SK-N-SH (cell line): ENCODE measurements at regions of chr20 and their contacts with region 1.

Region 1: GRCh38 chr20:46562373-46563169 is 12.1 kb upstream of the OCSTAMP start:
- DNase-seq: peak; percentile 80
- H3K4me3 ChIP-seq: peak overlapping the region; percentile 15 to 37; a peak in 3 of 4 replicates
- H3K27ac ChIP-seq: no peak overlapping the region; a peak in 1 of 4 replicates
- H3K4me1 ChIP-seq: peaks cover 0 to 12% of the 10 kb centered on the region in 2 experiments; a peak in 1 of 4 replicates
- H3K27me3 ChIP-seq: no peaks in the 10 kb centered on the region
- CTCF ChIP-seq: peak; percentile 92
- EP300 ChIP-seq: no peak
- RAD21 ChIP-seq: peak; percentile 59

Region 2: GRCh38 chr20:46430921-46431712 is 131.5 kb before region 1 on chr20:
- CTCF ChIA-PET with region 1: no interaction called
- POLR2A ChIA-PET with region 1: no interaction called
- DNase-seq: no peak
- H3K4me3 ChIP-seq: no peak overlapping the region
- H3K27ac ChIP-seq: no peak overlapping the region
- H3K4me1 ChIP-seq: peaks cover 0 to 8% of the 10 kb centered on the region in 2 experiments; a peak in 1 of 4 replicates
- H3K27me3 ChIP-seq: peaks cover 10% of the 10 kb centered on the region; the same call in 1 of the 2 replicates
- CTCF ChIP-seq: no peak
- EP300 ChIP-seq: no peak
- RAD21 ChIP-seq: no peak

Region 3: DNA sequence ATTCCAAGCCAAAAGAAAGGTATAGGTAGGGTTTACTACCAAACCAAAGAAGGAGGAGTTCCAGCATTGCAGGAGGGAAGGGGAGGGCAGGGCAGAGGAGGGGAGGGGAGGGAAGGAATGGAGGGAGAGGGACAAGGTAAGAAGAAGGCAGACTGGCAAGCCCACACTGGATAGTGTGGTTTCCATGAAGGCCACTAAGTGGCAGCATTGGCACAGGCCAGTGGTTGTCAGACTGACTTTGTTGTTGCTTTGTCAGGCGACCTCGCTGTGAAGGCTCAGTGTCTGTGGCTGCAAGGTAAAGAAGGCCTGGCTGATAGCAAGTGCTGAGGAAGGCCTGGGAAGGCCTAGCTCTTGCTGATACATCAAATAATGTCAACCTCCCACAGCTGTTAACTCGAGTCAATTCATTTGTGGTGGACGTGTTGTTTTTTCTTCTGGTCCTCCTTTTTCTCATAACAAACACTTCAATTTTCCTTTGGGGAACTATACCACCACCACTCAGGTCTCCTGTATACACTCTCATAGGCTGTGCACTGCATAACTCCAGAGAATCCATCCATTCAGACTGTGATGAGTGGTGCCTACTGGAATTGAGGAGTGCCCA is 41.5 kb before region 1 on chr20:
- CTCF ChIA-PET with region 1: interaction called, 12 read pairs
- POLR2A ChIA-PET with region 1: no interaction called
- DNase-seq: peak; percentile 68
- H3K4me3 ChIP-seq: no peak overlapping the region
- H3K27ac ChIP-seq: no peak overlapping the region
- H3K4me1 ChIP-seq: no peaks in the 10 kb centered on the region
- H3K27me3 ChIP-seq: no peaks in the 10 kb centered on the region
- CTCF ChIP-seq: peak; percentile 60
- EP300 ChIP-seq: no peak
- RAD21 ChIP-seq: peak; percentile 94

Region 4: GRCh38 chr20:46575937-46576461 is 13.4 kb after region 1 on chr20:
- CTCF ChIA-PET with region 1: interaction called, 21 read pairs
- POLR2A ChIA-PET with region 1: no interaction called
- DNase-seq: no peak
- H3K4me3 ChIP-seq: no peak overlapping the region
- H3K27ac ChIP-seq: no peak overlapping the region
- H3K4me1 ChIP-seq: peaks cover 0 to 15% of the 10 kb centered on the region in 2 experiments; a peak in 1 of 4 replicates
- H3K27me3 ChIP-seq: no peaks in the 10 kb centered on the region
- CTCF ChIP-seq: no peak
- EP300 ChIP-seq: no peak
- RAD21 ChIP-seq: no peak

Region 5: GRCh38 chr20:46689082-46689754 is 126.6 kb after region 1 on chr20 and contains the start of gene TP53RK:
- CTCF ChIA-PET with region 1: interaction called, 102 read pairs
- POLR2A ChIA-PET with region 1: no interaction called
- DNase-seq: peak; percentile 87
- H3K4me3 ChIP-seq: peak within 1 kb of the TSS; percentile 71 to 84
- H3K27ac ChIP-seq: peak within 1 kb of the TSS; percentile 87 to 89
- H3K4me1 ChIP-seq: peaks cover 4 to 10% of the 10 kb centered on the region in 2 experiments; a peak in 3 of 4 replicates
- H3K27me3 ChIP-seq: no peaks in the 10 kb centered on the region
- CTCF ChIP-seq: 0 out of 2 replicates have a peak, but pooled peaks have one; percentile 16
- EP300 ChIP-seq: no peak
- RAD21 ChIP-seq: no peak
- polyA plus RNA-seq, gene TP53RK: 5.4 and 5.5 TPM in 2 replicates